GM12878 (cell line): ENCODE measurements at regions of chr16 and their contacts with region 1.

Region 1: DNA sequence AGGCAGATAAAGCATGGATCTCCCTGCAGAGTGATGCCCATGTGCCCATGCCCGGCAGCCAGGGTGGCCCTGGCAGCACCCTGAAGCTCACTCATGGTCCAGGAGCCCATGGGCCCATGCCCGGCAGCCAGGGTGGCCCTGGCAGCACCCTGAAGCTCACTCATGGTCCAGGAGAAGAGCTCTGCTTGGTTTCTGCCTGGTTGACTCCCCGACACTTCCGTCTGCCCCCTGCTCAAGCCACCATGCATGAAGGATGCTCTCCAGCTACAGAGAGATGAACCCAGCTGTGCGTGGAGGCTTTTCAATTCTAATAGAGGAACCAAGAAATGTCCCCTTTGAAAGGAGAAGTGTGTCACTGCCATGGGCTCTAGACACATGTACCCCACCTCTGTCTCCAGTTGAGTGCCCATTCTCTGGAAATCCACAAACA is 8.7 kb downstream of the CCL17 start:
- DNase-seq: peak; percentile 52
- ATAC-seq: peak; percentile 72
- H3K4me3 ChIP-seq: no peak overlapping the region
- H3K27ac ChIP-seq: peak overlapping the region; percentile 42; the same call in 1 of the 2 replicates
- H3K4me1 ChIP-seq: peaks cover 51% of the 10 kb centered on the region
- H3K27me3 ChIP-seq: no peaks in the 10 kb centered on the region
- CTCF ChIP-seq: no peak
- EP300 ChIP-seq: no peak
- POLR2A ChIP-seq: no peak
- RAD21 ChIP-seq: no peak

Region 2: GRCh38 chr16:57013229-57013628 is 400.1 kb before region 1 on chr16:
- CTCF ChIA-PET with region 1: no interaction called
- POLR2A ChIA-PET with region 1: no interaction called
- RAD21 ChIA-PET with region 1: no interaction called
- SMC1A ChIA-PET with region 1: no interaction called
- in situ Hi-C with region 1: no loop called
- intact Hi-C with region 1: no loop called
- DNase-seq: no peak
- ATAC-seq: no peak
- H3K4me3 ChIP-seq: no peak overlapping the region
- H3K27ac ChIP-seq: peak overlapping the region; percentile 95
- H3K4me1 ChIP-seq: peaks cover 47% of the 10 kb centered on the region
- H3K27me3 ChIP-seq: no peaks in the 10 kb centered on the region
- CTCF ChIP-seq: no peak
- EP300 ChIP-seq: no peak
- POLR2A ChIP-seq: no peak
- RAD21 ChIP-seq: no peak

Region 3: DNA sequence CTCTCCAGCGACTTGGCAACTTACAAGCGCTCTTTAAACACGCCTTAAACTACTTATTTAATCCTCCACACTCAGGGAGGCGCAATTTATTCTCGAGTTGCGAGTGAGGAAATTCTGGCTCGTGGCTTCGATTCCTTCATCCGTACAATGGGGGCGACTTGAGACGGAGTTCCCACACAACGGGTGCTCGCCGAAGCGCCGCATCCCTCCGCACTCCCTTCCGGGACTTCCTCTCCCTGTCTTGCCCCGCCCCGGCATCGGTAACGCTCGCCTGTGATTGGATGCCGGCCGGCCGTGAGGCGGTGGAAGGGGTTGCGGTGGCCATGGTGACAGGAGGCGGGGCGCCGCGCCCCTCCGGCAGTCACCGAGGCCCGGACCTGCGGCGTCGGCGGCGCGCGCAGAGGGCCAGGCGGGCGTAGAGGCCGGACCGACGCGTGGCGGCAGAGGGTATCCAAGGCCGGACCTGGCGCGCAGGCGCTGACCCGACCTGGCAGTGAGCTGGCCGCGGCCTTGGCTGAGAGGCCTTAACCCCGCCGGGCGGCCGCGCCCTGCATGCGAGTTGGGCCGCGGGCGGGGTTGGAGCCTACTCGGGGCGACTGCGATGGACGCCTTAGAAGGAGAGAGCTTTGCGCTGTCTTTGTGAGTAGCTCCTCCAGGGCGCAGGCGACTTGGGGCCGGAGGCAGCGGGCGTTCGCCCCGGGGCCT is 168.4 kb before region 1 on chr16 and contains the start of gene ARL2BP:
- CTCF ChIA-PET with region 1: interaction called, 4 read pairs
- POLR2A ChIA-PET with region 1: no interaction called
- RAD21 ChIA-PET with region 1: no interaction called
- SMC1A ChIA-PET with region 1: interaction called, 9 read pairs
- in situ Hi-C with region 1: no loop called
- intact Hi-C with region 1: loop called (anchors 2 kb)
- DNase-seq: peak; percentile 84
- ATAC-seq: peak; percentile 96
- H3K4me3 ChIP-seq: peak within 1 kb of the TSS; percentile 73
- H3K27ac ChIP-seq: peak within 1 kb of the TSS; percentile 75
- H3K4me1 ChIP-seq: peaks cover 21% of the 10 kb centered on the region
- H3K27me3 ChIP-seq: no peaks in the 10 kb centered on the region
- CTCF ChIP-seq: peak in 1 of 3 experiments; percentile 22; a peak in 1 of 6 replicates
- EP300 ChIP-seq: no peak
- POLR2A ChIP-seq: peak; percentile 95
- RAD21 ChIP-seq: no peak
- polyA plus RNA-seq, gene ARL2BP: 12.5 to 20.5 TPM

Region 4: DNA sequence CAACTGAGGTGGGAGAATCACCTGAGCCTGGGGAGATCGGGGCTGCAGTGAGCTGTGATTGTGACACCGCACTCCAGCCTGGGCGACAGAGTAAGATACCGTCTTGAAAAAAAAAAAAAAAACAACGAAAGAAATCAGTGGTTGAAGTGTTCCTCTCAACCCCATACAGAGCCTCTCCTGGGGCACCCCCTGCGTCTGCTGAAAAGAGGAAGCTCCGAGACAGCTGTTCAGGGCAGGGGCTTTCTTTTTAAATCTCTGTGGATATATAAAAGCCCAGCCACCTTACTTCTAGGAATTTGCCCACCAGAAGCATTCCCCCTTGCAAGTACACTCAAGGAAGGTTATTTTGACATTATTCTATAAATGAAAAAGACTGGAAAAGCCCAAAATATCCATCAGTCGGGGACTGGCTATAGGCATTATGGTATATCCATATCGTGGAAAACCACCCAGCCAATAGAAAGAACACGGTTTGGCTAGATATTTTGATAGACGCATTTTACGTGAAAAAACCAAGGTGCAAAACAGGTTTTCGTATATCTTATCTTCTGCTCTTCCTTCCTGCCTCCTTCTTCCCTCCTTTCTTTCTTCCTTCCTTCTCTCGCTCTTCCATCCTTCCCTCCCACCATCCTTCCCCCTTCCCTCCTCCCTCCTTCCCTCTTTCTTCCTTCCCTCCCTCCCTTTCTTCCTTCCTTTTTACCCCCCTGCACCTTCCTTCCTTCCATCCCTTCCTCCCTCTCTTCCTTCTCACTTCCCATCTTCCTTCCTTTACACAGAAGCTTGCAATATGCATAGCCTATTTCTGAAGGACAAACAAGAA is 63.9 kb before region 1 on chr16:
- CTCF ChIA-PET with region 1: interaction called, 95 read pairs
- POLR2A ChIA-PET with region 1: interaction called, 3 read pairs
- RAD21 ChIA-PET with region 1: interaction called, 50 read pairs
- SMC1A ChIA-PET with region 1: interaction called, 14 read pairs
- in situ Hi-C with region 1: no loop called
- intact Hi-C with region 1: no loop called
- DNase-seq: peak; percentile 44
- ATAC-seq: peak; percentile 97
- H3K4me3 ChIP-seq: peak overlapping the region; percentile 53; the same call in 1 of the 2 replicates
- H3K27ac ChIP-seq: no peak overlapping the region
- H3K4me1 ChIP-seq: peaks cover 27% of the 10 kb centered on the region
- H3K27me3 ChIP-seq: no peaks in the 10 kb centered on the region
- CTCF ChIP-seq: no peak
- EP300 ChIP-seq: peak in 1 of 2 experiments; percentile 66; a peak in 2 of 4 replicates
- POLR2A ChIP-seq: no peak
- RAD21 ChIP-seq: peak; percentile 19; the same call in 1 of the 2 replicates

Region 5: DNA sequence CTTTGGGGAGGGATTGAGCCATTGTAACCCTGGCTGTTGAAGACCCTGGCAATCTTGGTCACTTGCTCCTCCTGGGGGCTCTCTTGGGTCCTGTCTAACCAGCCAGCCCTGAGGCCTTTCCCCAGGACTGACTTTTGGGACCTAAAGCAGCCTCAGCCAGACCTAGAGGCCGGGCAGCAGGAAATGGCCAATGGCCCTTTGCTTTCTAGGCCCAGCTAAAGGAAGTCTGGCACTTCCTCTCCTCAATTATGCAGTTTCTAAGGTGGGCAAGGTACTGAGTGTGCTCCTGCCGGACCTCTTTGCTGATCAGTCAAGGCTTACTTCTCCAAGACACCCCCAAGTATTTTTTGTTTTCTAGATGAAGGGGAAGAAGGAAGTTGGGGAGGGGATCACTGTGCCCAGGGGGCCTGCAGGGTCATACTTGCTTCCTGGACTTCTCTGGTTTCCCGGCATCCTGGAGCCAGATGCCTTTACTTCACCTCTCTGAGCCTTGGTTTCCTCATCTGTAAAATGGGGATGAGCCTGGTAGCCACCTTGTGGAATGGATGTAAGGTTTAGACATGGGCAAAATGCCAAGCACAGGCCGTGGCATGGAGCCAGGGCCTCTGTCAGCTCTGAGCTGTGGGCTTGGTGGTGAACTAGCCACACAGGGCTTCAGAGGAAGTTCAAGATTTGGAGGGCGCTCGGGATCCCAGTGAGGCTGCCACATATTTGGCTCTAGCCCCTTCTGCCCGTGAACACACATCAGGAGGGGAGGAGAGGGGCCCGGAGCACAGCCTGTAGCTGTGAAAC is 32.4 kb before region 1 on chr16:
- CTCF ChIA-PET with region 1: interaction called, 30 read pairs
- POLR2A ChIA-PET with region 1: interaction called, 13 read pairs
- RAD21 ChIA-PET with region 1: interaction called, 41 read pairs
- SMC1A ChIA-PET with region 1: interaction called, 23 read pairs
- in situ Hi-C with region 1: no loop called
- intact Hi-C with region 1: loop called (anchors 1 kb)
- DNase-seq: no peak
- ATAC-seq: peak; percentile 3
- H3K4me3 ChIP-seq: no peak overlapping the region
- H3K27ac ChIP-seq: peak overlapping the region; percentile 27
- H3K4me1 ChIP-seq: peaks cover 53% of the 10 kb centered on the region
- H3K27me3 ChIP-seq: no peaks in the 10 kb centered on the region
- CTCF ChIP-seq: no peak
- EP300 ChIP-seq: no peak
- POLR2A ChIP-seq: no peak
- RAD21 ChIP-seq: no peak

Region 6: GRCh38 chr16:57447186-57447962 is 34.1 kb after region 1 on chr16 and contains the starts of genes CIAPIN1 and COQ9:
- CTCF ChIA-PET with region 1: interaction called, 26 read pairs
- POLR2A ChIA-PET with region 1: no interaction called
- RAD21 ChIA-PET with region 1: interaction called, 6 read pairs
- SMC1A ChIA-PET with region 1: interaction called, 8 read pairs
- in situ Hi-C with region 1: no loop called
- intact Hi-C with region 1: no loop called
- DNase-seq: peak; percentile 74
- ATAC-seq: peak; percentile 99
- H3K4me3 ChIP-seq: peak within 1 kb of the TSS; percentile 97
- H3K27ac ChIP-seq: peak within 1 kb of the TSS; percentile 88
- H3K4me1 ChIP-seq: peaks cover 6% of the 10 kb centered on the region; the same call in 1 of the 2 replicates
- H3K27me3 ChIP-seq: no peaks in the 10 kb centered on the region
- CTCF ChIP-seq: no peak
- EP300 ChIP-seq: 0 out of 4 replicates have a peak, but pooled peaks of 1 of the 2 experiments have one; percentile 8
- POLR2A ChIP-seq: peak; percentile 92
- RAD21 ChIP-seq: no peak
- polyA plus RNA-seq, gene CIAPIN1: 118 to 150 TPM
- polyA plus RNA-seq, gene COQ9: 24.1 to 32.7 TPM

Region 7: DNA sequence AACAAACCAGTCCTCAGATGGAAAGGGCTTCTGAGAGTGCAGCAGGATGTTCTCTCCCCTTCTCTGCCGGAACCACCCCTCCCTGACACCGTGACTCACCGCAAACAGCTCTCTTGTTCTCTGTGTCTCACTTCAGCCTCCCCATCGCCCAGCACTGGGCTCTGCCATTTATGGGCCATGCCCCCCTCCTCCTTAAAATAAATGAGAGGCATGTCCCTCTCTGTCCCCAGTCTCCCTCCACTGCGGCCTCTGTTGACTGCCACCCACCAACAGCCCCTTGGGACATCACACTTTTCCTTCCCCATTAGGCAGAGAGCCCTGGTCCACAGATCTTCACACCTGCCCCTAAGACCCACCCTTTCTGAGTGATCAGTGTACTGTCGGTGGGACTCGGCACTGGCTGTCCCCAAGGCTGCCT is 116.8 kb after region 1 on chr16:
- CTCF ChIA-PET with region 1: interaction called, 45 read pairs
- POLR2A ChIA-PET with region 1: no interaction called
- RAD21 ChIA-PET with region 1: interaction called, 3 read pairs
- SMC1A ChIA-PET with region 1: interaction called, 5 read pairs
- in situ Hi-C with region 1: no loop called
- intact Hi-C with region 1: no loop called
- DNase-seq: no peak
- ATAC-seq: peak; percentile 85
- H3K4me3 ChIP-seq: peak overlapping the region; percentile 17; the same call in 1 of the 2 replicates
- H3K27ac ChIP-seq: peak overlapping the region; percentile 21
- H3K4me1 ChIP-seq: peaks cover 37% of the 10 kb centered on the region
- H3K27me3 ChIP-seq: no peaks in the 10 kb centered on the region
- CTCF ChIP-seq: no peak
- EP300 ChIP-seq: no peak; a peak in 1 of 4 replicates
- POLR2A ChIP-seq: no peak
- RAD21 ChIP-seq: no peak